Caco-2 (cell line): ENCODE measurements at regions of chr10 and their contacts with region 1.

Region 1: DNA sequence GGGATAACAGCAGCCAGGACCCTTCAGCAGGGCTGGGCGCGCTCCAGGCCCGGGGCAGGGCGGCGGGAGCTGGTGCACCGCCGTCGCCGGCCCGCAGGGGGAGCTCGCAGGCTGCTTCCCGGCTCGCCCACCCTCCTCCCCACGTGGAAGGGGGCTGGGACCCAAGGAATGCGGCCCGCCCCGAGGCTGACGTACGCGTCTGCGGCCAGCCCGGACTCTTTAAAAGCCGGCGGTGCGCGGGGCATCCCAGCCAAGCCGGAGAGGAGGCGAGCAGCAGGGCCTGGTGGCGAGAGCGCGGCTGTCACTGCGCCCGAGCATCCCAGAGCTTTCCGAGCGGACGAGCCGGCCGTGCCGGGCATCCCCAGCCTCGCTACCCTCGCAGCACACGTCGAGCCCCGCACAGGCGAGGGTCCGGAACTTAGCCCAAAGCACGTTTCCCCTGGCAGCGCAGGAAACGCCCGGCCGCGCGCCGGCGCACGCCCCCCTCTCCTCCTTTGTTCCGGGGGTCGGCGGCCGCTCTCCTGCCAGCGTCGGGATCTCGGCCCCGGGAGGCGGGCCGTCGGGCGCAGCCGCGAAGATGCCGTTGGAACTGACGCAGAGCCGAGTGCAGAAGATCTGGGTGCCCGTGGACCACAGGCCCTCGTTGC is at the start of gene PFKFB3:
- DNase-seq: peak; percentile 96 to 99
- H3K4me3 ChIP-seq: peak within 1 kb of the TSS; percentile 78
- H3K4me3 Mint-ChIP-seq: peak within 1 kb of the TSS; percentile 92
- H3K27ac Mint-ChIP-seq: peak within 1 kb of the TSS; percentile 78
- H3K4me1 ChIP-seq: peaks cover 13% of the 10 kb centered on the region
- H3K4me1 Mint-ChIP-seq: peaks cover 8% of the 10 kb centered on the region
- H3K27me3 ChIP-seq: no peaks in the 10 kb centered on the region
- H3K27me3 Mint-ChIP-seq: no peaks in the 10 kb centered on the region
- CTCF ChIP-seq: peak; percentile 88 to 99
- total RNA-seq, gene PFKFB3: 33.0 and 35.4 TPM in 2 replicates

Region 2: DNA sequence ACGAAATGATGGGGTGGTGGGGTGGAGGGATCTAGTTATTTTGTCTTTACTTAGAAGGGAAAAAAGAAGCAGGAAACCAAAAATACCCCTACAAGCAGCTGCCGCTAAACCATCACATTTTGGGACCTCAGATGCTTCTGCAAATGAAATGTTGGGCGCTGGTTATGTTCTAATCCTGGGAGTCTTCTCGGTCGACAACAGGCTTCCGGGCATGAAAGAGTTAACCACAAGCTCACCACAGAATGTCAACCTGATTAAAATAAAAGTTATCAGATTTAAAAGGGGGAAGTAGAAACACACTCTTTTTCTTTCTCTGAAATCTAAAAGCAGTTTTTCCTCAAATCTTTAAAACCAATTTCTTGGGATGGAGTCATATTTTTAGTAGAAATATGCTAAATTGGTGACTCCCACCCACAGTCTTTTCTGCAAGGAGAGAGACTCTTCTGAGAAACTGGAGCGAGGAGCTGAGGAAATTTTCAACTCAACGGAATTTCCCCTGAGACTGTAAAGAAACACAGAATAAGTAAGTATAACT is 157.4 kb before region 1 on chr10:
- CTCF ChIA-PET with region 1: no interaction called
- POLR2A ChIA-PET with region 1: no interaction called
- intact Hi-C with region 1: no loop called
- DNase-seq: no peak
- H3K4me3 ChIP-seq: no peak overlapping the region
- H3K4me3 Mint-ChIP-seq: no peak overlapping the region
- H3K27ac Mint-ChIP-seq: no peak overlapping the region
- H3K4me1 ChIP-seq: no peaks in the 10 kb centered on the region
- H3K4me1 Mint-ChIP-seq: peaks cover 7% of the 10 kb centered on the region
- H3K27me3 ChIP-seq: 0 out of 2 replicates have a peak, but pooled peaks cover 1% of the 10 kb centered on the region
- H3K27me3 Mint-ChIP-seq: peaks cover 31% of the 10 kb centered on the region
- CTCF ChIP-seq: no peak

Region 3: GRCh38 chr10:6108603-6109443 is 94.0 kb before region 1 on chr10:
- CTCF ChIA-PET with region 1: no interaction called
- POLR2A ChIA-PET with region 1: no interaction called
- intact Hi-C with region 1: loop called (anchors 1 kb)
- DNase-seq: peak in 1 of 2 experiments; percentile 47
- H3K4me3 ChIP-seq: no peak overlapping the region
- H3K4me3 Mint-ChIP-seq: no peak overlapping the region
- H3K27ac Mint-ChIP-seq: no peak overlapping the region
- H3K4me1 ChIP-seq: no peaks in the 10 kb centered on the region
- H3K4me1 Mint-ChIP-seq: no peaks in the 10 kb centered on the region
- H3K27me3 ChIP-seq: no peaks in the 10 kb centered on the region
- H3K27me3 Mint-ChIP-seq: no peaks in the 10 kb centered on the region
- CTCF ChIP-seq: peak; percentile 61 to 85

Region 4: DNA sequence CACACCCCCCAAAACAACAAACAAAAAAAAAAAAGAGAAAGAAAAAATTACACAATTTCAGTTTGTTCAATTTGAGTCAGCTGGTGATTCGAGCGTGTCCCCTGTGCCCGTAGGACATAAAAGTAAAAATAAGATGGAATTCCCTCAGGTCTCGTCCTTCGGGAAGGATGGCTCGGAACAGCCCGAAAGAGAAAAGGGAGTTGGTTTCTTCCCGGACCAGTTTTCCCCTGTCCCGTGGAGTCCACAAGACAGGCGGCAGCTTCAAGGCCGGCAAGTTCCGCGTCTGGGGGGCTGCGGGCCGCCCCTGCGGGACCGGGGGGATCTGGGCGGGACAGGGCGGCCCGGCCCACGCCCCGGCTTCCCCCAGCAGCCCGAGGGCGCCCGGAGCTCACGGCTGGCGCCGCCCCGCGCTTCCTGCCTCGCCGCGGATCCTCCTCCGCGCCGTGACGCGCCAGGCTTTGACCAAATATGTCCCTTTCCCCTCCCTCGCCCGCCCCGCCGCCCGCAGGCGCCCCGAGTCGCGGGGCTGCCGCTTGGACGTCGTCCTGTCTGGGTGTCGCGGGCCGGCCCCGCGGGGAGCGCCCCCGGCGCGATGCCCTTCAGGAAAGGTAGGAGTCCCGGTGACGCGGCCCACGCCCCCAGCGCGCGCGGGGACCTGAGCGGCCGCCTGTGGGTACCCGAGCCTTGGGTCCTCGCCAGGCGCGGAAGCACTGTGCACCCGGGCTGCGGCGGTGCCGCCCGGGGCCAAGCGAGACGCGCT is 58.2 kb before region 1 on chr10:
- CTCF ChIA-PET with region 1: interaction called, 5 read pairs
- POLR2A ChIA-PET with region 1: interaction called, 4 read pairs
- intact Hi-C with region 1: loop called (anchors 1 kb)
- DNase-seq: peak; percentile 88 to 92
- H3K4me3 ChIP-seq: peak overlapping the region; percentile 94
- H3K4me3 Mint-ChIP-seq: peak overlapping the region; percentile 90
- H3K27ac Mint-ChIP-seq: peak overlapping the region; percentile 66
- H3K4me1 ChIP-seq: peaks cover 10% of the 10 kb centered on the region; the same call in 1 of the 2 replicates
- H3K4me1 Mint-ChIP-seq: peaks cover 6% of the 10 kb centered on the region
- H3K27me3 ChIP-seq: no peaks in the 10 kb centered on the region
- H3K27me3 Mint-ChIP-seq: peaks cover 1% of the 10 kb centered on the region
- CTCF ChIP-seq: no peak

Region 5: GRCh38 chr10:6163364-6164270 is 39.2 kb before region 1 on chr10:
- CTCF ChIA-PET with region 1: interaction called, 12 read pairs
- POLR2A ChIA-PET with region 1: interaction called, 16 read pairs
- intact Hi-C with region 1: loop called (anchors 2 kb)
- DNase-seq: peak; percentile 90 to 98
- H3K4me3 ChIP-seq: peak overlapping the region; percentile 97
- H3K4me3 Mint-ChIP-seq: peak overlapping the region; percentile 88
- H3K27ac Mint-ChIP-seq: peak overlapping the region; percentile 98
- H3K4me1 ChIP-seq: peaks cover 20% of the 10 kb centered on the region
- H3K4me1 Mint-ChIP-seq: peaks cover 43% of the 10 kb centered on the region
- H3K27me3 ChIP-seq: no peaks in the 10 kb centered on the region
- H3K27me3 Mint-ChIP-seq: no peaks in the 10 kb centered on the region
- CTCF ChIP-seq: no peak

Region 6: DNA sequence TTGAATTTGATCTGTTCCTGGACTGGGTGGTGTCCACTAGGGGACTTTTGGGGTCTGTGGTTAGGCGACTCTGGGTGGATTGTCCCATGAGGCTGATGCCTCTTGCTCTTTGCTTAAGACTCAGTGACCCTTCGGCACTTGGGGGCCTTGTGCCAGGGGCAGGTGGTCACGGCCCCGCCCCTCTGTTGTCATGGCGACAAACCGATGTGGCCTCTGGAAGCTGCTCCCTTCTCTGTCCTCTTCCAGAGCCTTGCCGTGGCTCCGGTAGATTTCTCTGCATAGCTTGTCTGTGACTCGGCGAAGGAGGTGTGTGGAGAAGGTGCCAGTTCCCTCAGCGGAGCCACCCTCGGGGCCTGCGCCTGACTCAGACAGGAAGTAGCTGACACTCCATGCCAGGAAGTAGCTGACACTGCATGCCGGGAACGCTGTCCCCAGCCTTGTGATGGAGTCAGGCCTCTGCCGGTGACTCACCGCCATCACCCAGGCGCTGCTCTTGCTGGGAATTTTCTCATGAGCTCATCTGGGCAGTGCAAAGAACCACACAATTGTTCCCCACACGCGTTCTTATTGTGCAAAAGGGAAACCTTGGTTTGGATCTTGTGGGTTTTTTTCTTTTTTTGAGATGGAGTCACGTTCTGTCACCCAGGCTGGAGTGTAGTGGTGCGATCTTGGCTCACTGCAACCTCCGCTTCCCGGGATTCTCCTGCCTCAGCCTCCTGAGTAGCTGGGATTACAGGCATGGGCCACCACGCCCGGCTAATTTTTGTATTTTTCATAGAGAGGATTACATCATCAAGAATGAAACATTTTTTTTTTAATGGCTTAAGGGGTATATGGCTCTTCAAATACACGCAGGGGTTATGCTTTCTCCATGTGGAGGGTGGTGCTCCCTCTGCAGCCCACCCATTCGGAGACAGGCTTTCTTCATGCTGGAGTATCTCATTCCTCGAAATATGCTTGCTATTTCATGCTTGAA is 72.5 kb after region 1 on chr10:
- CTCF ChIA-PET with region 1: interaction called, 10 read pairs
- POLR2A ChIA-PET with region 1: interaction called, 7 read pairs
- intact Hi-C with region 1: loop called (anchors 1 kb)
- DNase-seq: peak; percentile 57 to 82
- H3K4me3 ChIP-seq: no peak overlapping the region
- H3K4me3 Mint-ChIP-seq: peak overlapping the region; percentile 66
- H3K27ac Mint-ChIP-seq: peak overlapping the region; percentile 51
- H3K4me1 ChIP-seq: peaks cover 35% of the 10 kb centered on the region
- H3K4me1 Mint-ChIP-seq: peaks cover 20% of the 10 kb centered on the region
- H3K27me3 ChIP-seq: no peaks in the 10 kb centered on the region
- H3K27me3 Mint-ChIP-seq: no peaks in the 10 kb centered on the region
- CTCF ChIP-seq: no peak

Region 7: GRCh38 chr10:6678211-6678803 is 475.5 kb after region 1 on chr10:
- CTCF ChIA-PET with region 1: no interaction called
- POLR2A ChIA-PET with region 1: no interaction called
- intact Hi-C with region 1: loop called (anchors 5 kb)
- DNase-seq: peak; percentile 53 to 66
- H3K4me3 ChIP-seq: no peak overlapping the region
- H3K4me3 Mint-ChIP-seq: no peak overlapping the region
- H3K27ac Mint-ChIP-seq: no peak overlapping the region
- H3K4me1 ChIP-seq: no peaks in the 10 kb centered on the region
- H3K4me1 Mint-ChIP-seq: no peaks in the 10 kb centered on the region
- H3K27me3 ChIP-seq: no peaks in the 10 kb centered on the region
- H3K27me3 Mint-ChIP-seq: peaks cover 31% of the 10 kb centered on the region
- CTCF ChIP-seq: peak; percentile 89 to 91